Activated T-helper 1 cell treated with anti-CD3 and anti-CD28 coated beads, Interleukin-12 subunit alpha, Interleukin-12 subunit beta, Interleukin-2, Interleukin-4 antibody, amounts not matched to agents 30 ng/mL and 10 ng/mL and 1 ng/mL, durations not matched to agents 14 hours and 24 hours and 36 hours (primary cell): ENCODE measurements at regions of chr21 and their contacts with region 1.

Region 1: DNA sequence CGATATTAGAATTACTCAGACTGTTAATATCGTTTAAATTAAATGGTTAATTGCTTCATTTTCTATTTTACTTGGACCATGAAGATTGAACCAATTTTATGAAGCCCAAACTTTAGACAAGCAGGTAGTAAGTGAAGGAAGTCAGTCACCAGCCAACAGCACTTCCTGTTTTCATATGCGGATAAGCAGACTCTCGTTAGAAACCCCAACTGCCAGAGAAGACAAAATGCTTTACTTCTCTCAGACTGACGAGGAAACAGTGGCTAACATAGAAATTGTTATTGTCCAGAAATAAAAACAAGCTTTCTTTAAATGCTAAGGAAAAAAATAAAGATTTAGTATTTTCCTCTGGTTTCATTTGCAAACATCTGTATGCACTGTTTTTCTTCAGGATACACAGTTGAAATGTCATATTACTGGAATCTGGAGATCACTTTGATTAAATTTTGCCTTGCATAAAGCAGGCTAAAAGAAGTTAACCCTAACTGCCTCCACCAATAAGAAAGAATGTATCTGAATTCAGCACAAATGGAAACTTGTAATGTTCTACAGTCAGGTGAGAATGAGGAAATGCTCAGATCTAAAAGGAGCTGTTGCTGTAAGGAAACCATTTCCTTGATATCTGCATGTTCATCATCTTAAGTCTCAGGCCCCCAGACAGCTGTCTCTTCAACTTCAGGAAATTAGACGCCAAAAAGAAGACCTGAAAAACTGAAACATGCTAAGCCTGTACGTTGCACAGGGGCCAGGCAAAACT is 129.8 kb upstream of the SAMSN1 start:
- DNase-seq: no peak
- H3K4me3 Mint-ChIP-seq: peak overlapping the region; percentile 74
- H3K27ac Mint-ChIP-seq: peak overlapping the region; percentile 97
- H3K4me1 Mint-ChIP-seq: peaks cover 49% of the 10 kb centered on the region
- H3K27me3 Mint-ChIP-seq: no peaks in the 10 kb centered on the region

Region 2: GRCh38 chr21:14630556-14631069 is 45.3 kb before region 1 on chr21:
- intact Hi-C with region 1: loop called (anchors 2 kb)
- DNase-seq: no peak
- H3K4me3 Mint-ChIP-seq: no peak overlapping the region
- H3K27ac Mint-ChIP-seq: peak overlapping the region; percentile 72
- H3K4me1 Mint-ChIP-seq: peaks cover 14% of the 10 kb centered on the region
- H3K27me3 Mint-ChIP-seq: peaks cover 2% of the 10 kb centered on the region

Region 3: GRCh38 chr21:14712121-14712723 is 36.3 kb after region 1 on chr21:
- intact Hi-C with region 1: no loop called
- DNase-seq: no peak
- H3K4me3 Mint-ChIP-seq: no peak overlapping the region
- H3K27ac Mint-ChIP-seq: no peak overlapping the region
- H3K4me1 Mint-ChIP-seq: peaks cover 7% of the 10 kb centered on the region
- H3K27me3 Mint-ChIP-seq: no peaks in the 10 kb centered on the region